RWPE1 (cell line): ENCODE measurements at regions of chr18 and their contacts with region 1.

Region 1: GRCh38 chr18:3323900-3324299 is 62.0 kb downstream of the MYL12B start:
- DNase-seq: no peak
- H3K27ac ChIP-seq: no peak overlapping the region
- CTCF ChIP-seq: no peak

Region 2: DNA sequence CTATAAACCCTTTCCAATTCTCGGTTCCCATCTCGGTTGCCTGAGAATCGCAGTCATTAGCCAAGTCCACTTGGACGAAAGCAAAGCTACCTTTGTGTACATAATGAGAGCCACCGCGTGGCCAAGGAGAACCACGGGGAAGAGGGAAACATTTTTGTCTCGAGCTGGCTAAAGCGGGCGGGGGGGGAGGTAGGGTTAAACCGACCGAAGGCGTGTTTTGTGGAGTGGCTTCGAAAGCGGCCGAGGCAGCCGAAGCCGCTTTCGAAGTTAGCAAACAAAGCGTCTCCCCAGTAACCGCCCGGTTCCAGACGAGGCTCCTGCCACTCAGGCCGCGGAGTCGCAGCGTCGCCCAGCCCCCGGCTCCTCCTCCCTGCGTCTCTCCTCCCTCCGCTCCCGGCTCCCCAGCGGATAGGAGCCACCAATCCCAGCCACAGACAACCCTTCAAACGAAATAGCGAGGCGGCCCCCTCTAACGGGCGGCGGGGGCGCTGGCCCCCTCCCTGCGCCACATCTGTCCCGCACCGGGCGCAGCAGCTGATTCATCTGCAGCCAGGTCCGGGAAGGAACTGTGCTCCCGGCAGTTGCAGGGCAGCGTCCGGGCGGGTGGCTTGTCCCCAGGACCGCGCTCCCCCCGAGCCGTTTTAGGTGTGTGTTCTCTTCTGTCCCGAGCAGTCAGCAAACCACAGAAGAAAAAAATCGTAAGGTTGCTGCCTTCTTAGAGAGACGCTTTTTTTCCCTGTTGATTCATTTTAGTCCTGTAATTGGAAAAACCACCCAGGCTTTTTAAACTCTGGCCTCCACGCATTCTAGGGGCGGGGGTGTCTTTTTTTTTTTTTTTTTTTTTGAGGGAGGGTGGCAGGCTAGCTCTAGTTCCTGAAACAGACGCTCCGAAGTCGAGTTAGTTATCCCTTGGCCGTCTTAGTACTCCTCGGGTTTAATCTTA is 124.3 kb after region 1 on chr18:
- CTCF ChIA-PET with region 1: interaction called, 4 read pairs
- POLR2A ChIA-PET with region 1: interaction called, 11 read pairs
- DNase-seq: peak; percentile 93
- H3K27ac ChIP-seq: peak overlapping the region; percentile 100
- CTCF ChIP-seq: peak; percentile 22; the same call in 1 of the 2 replicates